Heart right ventricle (tissue), 16 donors: ENCODE measurements at regions of chr3 and their contacts with region 1.

Region 1: DNA sequence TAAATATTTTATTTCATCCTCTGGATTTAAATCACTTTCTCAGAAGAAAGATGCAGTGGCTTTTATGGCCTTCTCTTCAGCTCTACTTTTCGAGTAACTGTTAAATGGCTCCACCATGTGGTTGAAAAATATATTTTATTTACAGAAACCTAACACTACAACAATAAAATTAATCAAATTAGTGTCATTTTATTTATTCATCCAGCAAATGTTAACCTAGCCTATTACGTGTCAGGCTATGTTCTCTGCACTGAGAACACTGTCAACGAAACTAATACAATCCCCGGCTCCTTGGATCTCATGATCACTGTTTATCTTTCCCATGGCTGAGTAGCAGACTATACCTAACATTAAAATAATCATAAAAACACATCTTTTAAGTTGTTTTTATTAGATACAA is 148.0 kb upstream of the OSTN start:
- DNase-seq: no peak
- ATAC-seq: no peak
- H3K4me3 ChIP-seq: no peak overlapping the region
- H3K27ac ChIP-seq: no peak overlapping the region
- H3K4me1 ChIP-seq: no peaks in the 10 kb centered on the region
- H3K27me3 ChIP-seq: no peaks in the 10 kb centered on the region
- CTCF ChIP-seq: peak in 7 of 9 donors; percentile 39 to 66 (median 53)

Region 2: DNA sequence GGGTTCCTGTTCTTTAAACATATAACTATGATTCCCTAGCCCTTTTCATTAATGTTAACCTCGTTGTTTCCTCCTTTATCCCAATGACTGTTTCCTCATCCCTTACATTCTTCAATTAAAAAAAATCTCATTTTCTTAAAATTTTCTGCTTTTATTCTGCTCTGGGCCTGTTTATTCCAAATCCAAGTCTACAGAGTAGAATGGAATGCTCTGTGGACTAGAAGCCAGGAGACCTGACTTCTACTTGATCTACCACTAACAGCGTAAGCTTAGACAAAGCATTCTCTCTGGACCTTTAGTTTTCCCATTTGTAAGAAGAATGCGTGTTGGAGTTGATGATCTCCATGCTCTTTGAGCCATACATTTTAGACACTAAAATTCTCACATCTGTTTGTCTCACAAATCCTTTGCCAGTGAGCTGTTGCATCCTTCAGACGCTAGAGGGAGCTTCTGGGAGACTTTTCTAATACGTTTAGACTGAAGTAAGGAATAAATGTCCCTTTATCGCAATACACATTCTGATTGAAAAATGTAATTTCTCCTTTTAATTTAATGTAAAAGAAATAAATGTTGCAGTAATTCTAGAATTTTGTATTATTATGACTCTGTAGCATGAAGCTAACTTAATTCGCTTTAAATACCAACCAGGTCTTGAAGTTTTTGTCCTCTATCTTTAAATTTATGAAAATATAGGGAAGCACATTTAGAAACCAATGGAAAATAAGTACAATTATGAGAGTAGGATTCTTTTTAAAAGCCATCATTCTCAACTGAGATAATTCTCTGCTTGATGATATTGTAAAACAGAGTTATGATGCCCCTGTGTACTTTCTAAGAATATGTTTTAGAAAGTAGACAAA is 166.8 kb before region 1 on chr3:
- intact Hi-C with region 1: loop called in 8 of 10 experiments (anchors 2 to 10 kb)
- DNase-seq: peak in 1 of 2 donors; percentile 29
- ATAC-seq: no peak
- H3K4me3 ChIP-seq: no peak overlapping the region
- H3K27ac ChIP-seq: no peak overlapping the region
- H3K4me1 ChIP-seq: no peaks in the 10 kb centered on the region
- H3K27me3 ChIP-seq: peaks cover 0 to 4% (median 0%) of the 10 kb centered on the region in 7 donors
- CTCF ChIP-seq: peak; percentile 68 to 89 (median 84)

Region 3: GRCh38 chr3:191085091-191085490 is 34.1 kb after region 1 on chr3:
- intact Hi-C with region 1: no loop called
- DNase-seq: no peak
- ATAC-seq: no peak
- H3K4me3 ChIP-seq: no peak overlapping the region
- H3K27ac ChIP-seq: no peak overlapping the region
- H3K4me1 ChIP-seq: no peaks in the 10 kb centered on the region
- H3K27me3 ChIP-seq: no peaks in the 10 kb centered on the region
- CTCF ChIP-seq: no peak